GM12878 (cell line): ENCODE measurements at regions of chr6 and their contacts with region 1.

Region 1: DNA sequence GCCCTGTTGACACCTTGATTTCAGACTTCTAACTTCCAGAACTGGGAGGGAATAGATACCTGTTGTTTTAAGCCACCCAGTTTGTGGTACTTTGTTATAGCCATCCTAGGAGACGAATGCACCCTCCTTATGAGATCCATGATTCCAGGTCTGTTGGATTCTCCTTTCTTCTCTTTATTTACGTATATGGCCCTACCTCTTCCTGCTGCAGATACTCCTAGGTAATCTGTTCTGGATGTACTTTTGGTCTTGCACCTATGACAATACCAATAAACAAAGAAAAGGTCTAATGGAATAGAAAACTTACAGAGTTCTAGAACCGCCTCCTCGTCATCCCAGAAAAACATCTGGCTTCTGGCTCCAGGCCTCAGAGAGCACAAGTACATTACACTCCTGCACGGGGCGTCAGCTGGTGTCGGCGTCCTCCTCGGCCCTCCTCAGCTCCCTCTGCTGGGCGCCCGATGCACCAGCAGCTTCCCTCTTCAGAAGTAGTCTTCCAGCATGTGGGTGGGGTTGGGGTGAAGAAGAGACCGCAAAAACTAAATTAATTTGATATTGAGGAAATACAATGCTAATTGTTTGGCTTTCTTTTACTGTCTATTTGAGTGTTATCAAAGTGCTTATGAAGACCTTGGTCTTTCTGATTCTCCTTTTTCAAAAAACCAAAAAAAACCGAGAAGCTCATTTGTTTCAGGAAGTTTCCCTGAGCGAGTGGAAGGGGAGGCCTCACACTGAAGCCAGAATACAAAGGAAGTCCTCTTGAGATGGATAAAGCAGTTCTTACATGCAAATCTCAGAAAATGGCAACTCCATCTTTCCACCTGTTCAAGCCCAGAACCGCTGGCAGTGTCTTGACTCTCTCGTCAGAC is 9.7 kb upstream of the ATXN1 start:
- DNase-seq: no peak
- ATAC-seq: peak; percentile 87
- H3K4me3 ChIP-seq: no peak overlapping the region
- H3K27ac ChIP-seq: no peak overlapping the region
- H3K4me1 ChIP-seq: no peaks in the 10 kb centered on the region; the same call in 1 of the 2 replicates
- H3K27me3 ChIP-seq: no peaks in the 10 kb centered on the region
- CTCF ChIP-seq: peak; percentile 89 to 98 (median 94)
- EP300 ChIP-seq: 0 out of 4 replicates have a peak, but pooled peaks of 1 of the 2 experiments have one; percentile 18
- POLR2A ChIP-seq: no peak
- RAD21 ChIP-seq: peak; percentile 72

Region 2: DNA sequence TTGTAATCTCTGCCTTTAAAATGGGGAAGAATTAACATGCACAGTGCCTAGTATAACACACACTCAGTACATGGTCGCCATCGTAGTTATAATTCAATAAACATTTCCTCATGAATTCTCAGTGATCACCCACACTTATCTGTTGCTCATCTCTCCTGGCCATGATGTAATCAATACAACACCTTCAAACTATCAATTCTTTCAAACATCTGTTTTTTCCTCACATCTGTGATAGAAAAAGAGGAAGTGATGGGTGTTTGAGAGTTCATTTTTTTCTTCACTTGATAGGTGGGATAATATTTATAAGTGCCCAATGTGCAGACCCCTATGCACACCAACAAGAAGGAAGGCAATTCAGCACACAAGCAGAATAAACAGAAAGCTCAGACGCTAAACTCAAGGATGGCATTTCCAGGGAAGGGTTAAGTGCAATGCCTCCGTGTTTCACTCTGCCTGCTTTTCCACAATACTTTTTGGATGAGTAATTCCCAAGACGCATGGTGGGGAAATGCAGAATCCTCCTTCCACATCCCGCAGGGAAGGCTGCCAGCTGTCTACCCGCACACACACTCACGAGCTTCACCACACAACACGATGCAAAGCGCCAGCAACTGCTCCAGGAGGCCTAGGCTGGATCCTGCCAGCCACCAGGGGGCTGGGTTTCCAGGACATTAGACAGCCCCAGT is 432.2 kb before region 1 on chr6:
- CTCF ChIA-PET with region 1: interaction called, 115 read pairs
- POLR2A ChIA-PET with region 1: no interaction called
- RAD21 ChIA-PET with region 1: interaction called, 7 read pairs
- SMC1A ChIA-PET with region 1: interaction called, 12 read pairs
- in situ Hi-C with region 1: loop called (anchors 5 kb)
- intact Hi-C with region 1: no loop called
- DNase-seq: no peak
- ATAC-seq: peak; percentile 35; the same call in 2 of the 3 replicates
- H3K4me3 ChIP-seq: no peak overlapping the region
- H3K27ac ChIP-seq: no peak overlapping the region
- H3K4me1 ChIP-seq: no peaks in the 10 kb centered on the region
- H3K27me3 ChIP-seq: no peaks in the 10 kb centered on the region
- CTCF ChIP-seq: peak in 2 of 3 experiments; percentile 13 to 20; a peak in 1 of 6 replicates
- EP300 ChIP-seq: no peak
- POLR2A ChIP-seq: no peak
- RAD21 ChIP-seq: no peak

Region 3: GRCh38 chr6:16403831-16404230 is 367.1 kb before region 1 on chr6:
- CTCF ChIA-PET with region 1: interaction called, 11 read pairs
- POLR2A ChIA-PET with region 1: no interaction called
- RAD21 ChIA-PET with region 1: no interaction called
- SMC1A ChIA-PET with region 1: interaction called, 3 read pairs
- in situ Hi-C with region 1: no loop called
- intact Hi-C with region 1: no loop called
- DNase-seq: no peak
- ATAC-seq: no peak
- H3K4me3 ChIP-seq: no peak overlapping the region
- H3K27ac ChIP-seq: no peak overlapping the region
- H3K4me1 ChIP-seq: peaks cover 4% of the 10 kb centered on the region; the same call in 1 of the 2 replicates
- H3K27me3 ChIP-seq: no peaks in the 10 kb centered on the region
- CTCF ChIP-seq: no peak; a peak in 1 of 6 replicates
- EP300 ChIP-seq: no peak
- POLR2A ChIP-seq: no peak
- RAD21 ChIP-seq: peak; percentile 21; the same call in 1 of the 2 replicates

Region 4: GRCh38 chr6:16836144-16836981 is 65.4 kb after region 1 on chr6:
- CTCF ChIA-PET with region 1: interaction called, 3 read pairs
- POLR2A ChIA-PET with region 1: no interaction called
- RAD21 ChIA-PET with region 1: interaction called, 10 read pairs
- SMC1A ChIA-PET with region 1: interaction called, 6 read pairs
- in situ Hi-C with region 1: no loop called
- intact Hi-C with region 1: no loop called
- DNase-seq: peak; percentile 77
- ATAC-seq: peak; percentile 80
- H3K4me3 ChIP-seq: peak overlapping the region; percentile 37; the same call in 1 of the 2 replicates
- H3K27ac ChIP-seq: peak overlapping the region; percentile 57
- H3K4me1 ChIP-seq: peaks cover 36% of the 10 kb centered on the region
- H3K27me3 ChIP-seq: no peaks in the 10 kb centered on the region
- CTCF ChIP-seq: no peak
- EP300 ChIP-seq: peak; percentile 31 to 62; a peak in 3 of 4 replicates
- POLR2A ChIP-seq: no peak
- RAD21 ChIP-seq: no peak

Region 5: DNA sequence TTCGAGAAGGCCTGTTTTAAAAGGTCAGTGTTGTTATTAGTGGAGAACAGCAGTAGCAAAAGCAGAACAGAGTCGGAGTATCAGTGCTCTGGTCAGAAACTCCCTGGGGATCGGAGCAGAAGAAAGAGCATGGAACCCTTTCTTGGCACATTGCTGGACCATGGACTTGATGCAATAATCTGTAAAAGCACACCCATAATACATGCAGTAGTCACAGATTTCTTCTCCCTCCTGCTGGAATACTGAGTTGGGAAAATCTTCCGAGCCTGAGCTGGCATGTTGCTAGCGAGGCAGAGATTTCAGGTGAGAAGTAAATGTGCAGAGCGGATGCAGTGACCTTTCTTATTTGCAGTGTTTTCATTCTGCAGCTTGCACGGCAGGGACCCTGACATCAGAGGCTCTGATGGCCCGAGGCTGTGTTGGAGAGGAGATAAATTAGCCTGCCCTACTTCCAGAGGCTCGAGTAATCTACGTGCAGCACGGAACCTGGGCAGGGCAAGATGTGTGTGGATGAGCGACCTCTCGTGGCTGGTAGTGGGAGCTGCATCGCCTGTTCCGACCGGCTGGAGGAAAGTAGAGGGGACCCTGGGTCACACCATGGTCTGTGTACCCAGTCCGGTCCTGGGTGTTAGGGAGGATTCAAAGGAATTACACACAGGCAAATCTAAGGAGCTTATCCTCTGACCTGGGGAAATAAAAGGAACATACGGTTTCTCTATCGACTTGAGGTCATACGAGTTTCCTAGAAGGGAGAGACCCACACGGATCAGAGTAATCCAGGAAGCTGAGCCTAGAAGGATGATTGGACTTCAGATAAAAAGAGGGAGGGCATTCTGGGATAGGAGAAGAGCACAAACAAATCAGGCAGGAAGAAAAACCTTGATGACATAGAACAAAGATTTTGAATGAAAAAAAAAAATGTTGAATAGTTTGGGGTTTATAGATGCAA is 193.9 kb after region 1 on chr6:
- CTCF ChIA-PET with region 1: interaction called, 95 read pairs
- POLR2A ChIA-PET with region 1: no interaction called
- RAD21 ChIA-PET with region 1: interaction called, 7 read pairs
- SMC1A ChIA-PET with region 1: interaction called, 24 read pairs
- in situ Hi-C with region 1: loop called (anchors 10 kb)
- intact Hi-C with region 1: no loop called
- DNase-seq: peak; percentile 12
- ATAC-seq: peak; percentile 99
- H3K4me3 ChIP-seq: no peak overlapping the region
- H3K27ac ChIP-seq: no peak overlapping the region
- H3K4me1 ChIP-seq: no peaks in the 10 kb centered on the region
- H3K27me3 ChIP-seq: no peaks in the 10 kb centered on the region; a peak in 1 of 4 replicates
- CTCF ChIP-seq: peak; percentile 81 to 95 (median 92)
- EP300 ChIP-seq: no peak
- POLR2A ChIP-seq: no peak
- RAD21 ChIP-seq: peak; percentile 85

Region 6: DNA sequence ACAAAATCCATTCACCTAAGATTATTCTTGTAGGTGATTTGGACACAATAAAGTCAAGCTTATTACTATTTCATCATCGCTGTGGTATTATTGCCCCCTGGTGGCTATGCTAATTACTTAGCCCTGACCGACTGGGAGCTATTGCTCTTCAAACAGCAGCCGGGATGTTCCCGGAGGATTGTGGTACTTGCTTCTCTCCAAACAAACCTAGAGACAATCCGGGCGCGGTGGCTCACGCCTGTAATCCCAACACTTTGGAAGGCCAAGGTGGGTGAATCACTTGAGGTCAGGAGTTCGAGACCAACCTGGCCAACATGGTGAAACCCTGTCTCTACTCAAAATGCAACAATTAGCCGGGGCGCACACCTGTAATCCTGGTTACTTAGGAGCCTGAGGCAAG is 315.5 kb after region 1 on chr6:
- CTCF ChIA-PET with region 1: interaction called, 27 read pairs
- POLR2A ChIA-PET with region 1: no interaction called
- RAD21 ChIA-PET with region 1: interaction called, 4 read pairs
- SMC1A ChIA-PET with region 1: interaction called, 3 read pairs
- in situ Hi-C with region 1: no loop called
- intact Hi-C with region 1: loop called (anchors 2 kb)
- DNase-seq: no peak
- ATAC-seq: peak; percentile 81
- H3K4me3 ChIP-seq: no peak overlapping the region
- H3K27ac ChIP-seq: no peak overlapping the region
- H3K4me1 ChIP-seq: no peaks in the 10 kb centered on the region
- H3K27me3 ChIP-seq: no peaks in the 10 kb centered on the region
- CTCF ChIP-seq: peak; percentile 46 to 56 (median 52)
- EP300 ChIP-seq: no peak
- POLR2A ChIP-seq: no peak
- RAD21 ChIP-seq: peak; percentile 63